GM10248 (cell line): ENCODE measurements at regions of chr2 and their contacts with region 1.

Region 1: DNA sequence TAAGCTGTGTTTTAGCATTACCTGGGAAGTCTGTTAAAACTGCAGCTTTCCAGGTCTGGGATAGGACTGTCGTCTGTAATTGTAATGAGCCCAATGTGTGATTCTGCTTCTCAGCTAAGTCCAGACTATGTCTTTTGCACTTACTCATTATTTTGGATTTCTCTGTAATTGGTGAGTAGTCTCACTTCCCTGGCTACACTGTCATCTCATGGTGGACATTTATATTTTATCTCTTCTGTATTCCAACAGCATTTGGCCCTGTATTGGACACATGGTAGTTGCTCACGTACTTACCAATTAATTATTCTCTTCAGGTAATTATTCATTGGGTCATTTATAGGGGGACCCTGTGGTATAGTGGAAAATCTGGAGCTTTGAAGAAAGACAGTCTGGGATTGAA is 28.0 kb downstream of the LHCGR start:
- DNase-seq: no peak
- CTCF ChIP-seq: peak; percentile 10

Region 2: DNA sequence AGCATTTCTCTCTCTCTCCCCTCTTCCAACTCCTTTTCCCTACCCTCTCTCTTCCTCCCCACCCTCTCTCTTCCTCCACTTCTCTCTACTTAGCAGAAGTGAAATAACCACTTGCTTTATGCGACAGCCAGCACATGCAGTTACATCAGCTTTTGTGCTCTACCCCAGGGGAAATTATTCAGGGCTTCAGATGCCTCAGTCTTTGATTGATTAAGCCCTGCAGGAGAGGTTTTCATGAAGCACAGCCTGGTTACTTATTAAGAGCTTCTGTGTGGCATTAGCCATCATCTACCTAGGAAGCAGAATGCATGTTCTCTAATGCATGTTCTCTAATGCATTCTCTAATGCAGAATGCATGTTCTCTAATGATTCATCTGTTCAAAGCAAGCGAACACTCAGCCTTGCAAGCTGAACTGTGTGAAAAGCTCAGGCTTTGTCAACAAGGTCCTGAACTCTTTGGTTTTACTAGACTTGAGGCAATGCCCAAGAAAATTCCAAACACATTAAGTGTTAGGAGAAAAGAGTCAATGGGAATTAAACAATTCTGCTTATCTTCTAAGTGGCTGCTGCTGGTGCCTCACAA is 28.1 kb before region 1 on chr2:
- CTCF ChIA-PET with region 1: no interaction called
- POLR2A ChIA-PET with region 1: no interaction called
- DNase-seq: no peak
- CTCF ChIP-seq: no peak

Region 3: GRCh38 chr2:48715042-48715899 is 12.3 kb before region 1 on chr2:
- CTCF ChIA-PET with region 1: interaction called, 13 read pairs
- POLR2A ChIA-PET with region 1: no interaction called
- DNase-seq: no peak
- CTCF ChIP-seq: no peak